ENCODE measurements at regions of chr11 and their contacts with region 1.

Region 1: GRCh38 chr11:126268708-126269579 is at the starts of genes FOXRED1 and SRPRA:
- DNase-seq: peak; percentile 99
- H3K4me3 ChIP-seq: peak within 1 kb of the TSS; percentile 89 to 93 (median 90)
- H3K27ac ChIP-seq: peak within 1 kb of the TSS; percentile 91
- H3K4me1 ChIP-seq: peaks cover 13% of the 10 kb centered on the region
- H3K27me3 ChIP-seq: no peaks in the 10 kb centered on the region
- CTCF ChIP-seq: no peak
- total RNA-seq, gene FOXRED1: 8.0 to 30.8 TPM
- total RNA-seq, gene SRPRA: 79.9 to 108 TPM

Region 2: GRCh38 chr11:125923012-125923579 is 345.8 kb before region 1 on chr11:
- CTCF ChIA-PET with region 1: no interaction called
- dilution Hi-C with region 1: no loop called
- in situ Hi-C with region 1: no loop called
- intact Hi-C with region 1: loop called (anchors 5 kb)
- DNase-seq: peak; percentile 50
- H3K4me3 ChIP-seq: no peak overlapping the region
- H3K27ac ChIP-seq: no peak overlapping the region
- H3K4me1 ChIP-seq: no peaks in the 10 kb centered on the region
- H3K27me3 ChIP-seq: peaks cover 3% of the 10 kb centered on the region
- CTCF ChIP-seq: peak; percentile 88 to 93

Region 3: GRCh38 chr11:125990244-125990643 is 278.7 kb before region 1 on chr11:
- CTCF ChIA-PET with region 1: no interaction called
- dilution Hi-C with region 1: no loop called
- in situ Hi-C with region 1: no loop called
- intact Hi-C with region 1: no loop called
- DNase-seq: peak; percentile 25
- H3K4me3 ChIP-seq: no peak overlapping the region
- H3K27ac ChIP-seq: no peak overlapping the region
- H3K4me1 ChIP-seq: no peaks in the 10 kb centered on the region
- H3K27me3 ChIP-seq: no peaks in the 10 kb centered on the region
- CTCF ChIP-seq: no peak

Region 4: DNA sequence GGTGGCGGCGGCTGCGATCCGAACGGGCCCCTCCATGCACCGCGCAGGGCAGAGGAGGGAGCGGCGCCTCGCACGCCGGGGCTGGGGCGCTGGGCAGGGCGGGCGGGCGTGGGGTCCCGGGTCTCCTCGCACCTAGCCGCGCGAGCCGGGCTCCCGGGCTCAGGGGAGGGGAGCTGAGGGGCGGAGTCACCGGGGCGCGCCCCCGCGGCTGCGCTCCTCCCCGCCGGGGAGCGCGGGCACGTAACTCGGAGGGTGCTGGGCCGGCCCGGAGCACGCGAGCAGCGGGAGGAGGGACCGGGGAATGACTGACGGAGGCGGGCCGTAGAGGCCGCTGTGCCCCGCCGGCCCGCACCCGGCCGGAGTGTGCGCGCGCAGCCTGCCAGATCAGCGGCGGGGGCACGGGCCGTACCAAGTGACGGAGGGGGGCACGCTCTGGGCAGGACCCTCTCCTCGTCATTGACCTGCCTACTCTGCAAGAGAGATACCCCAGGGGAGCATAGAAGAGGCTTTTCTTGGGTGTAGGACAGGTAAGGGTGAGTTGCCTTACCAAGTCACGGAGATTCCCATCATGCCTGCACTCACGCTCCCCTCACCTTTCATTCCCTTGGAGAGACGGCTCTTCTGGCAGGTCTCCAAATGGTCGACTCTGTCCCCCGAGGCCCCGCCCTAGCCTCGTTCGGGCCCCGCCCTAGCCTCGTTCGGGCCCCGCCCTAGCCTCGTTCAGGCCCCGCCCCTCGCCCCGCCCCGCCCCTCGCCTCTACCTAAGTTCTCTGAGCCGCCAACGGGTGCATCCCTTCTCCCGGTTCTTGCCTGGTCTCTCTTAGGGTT is 206.1 kb before region 1 on chr11 and contains the start of gene CDON:
- CTCF ChIA-PET with region 1: no interaction called
- dilution Hi-C with region 1: no loop called
- in situ Hi-C with region 1: no loop called
- intact Hi-C with region 1: loop called (anchors 5 kb)
- DNase-seq: peak; percentile 86
- H3K4me3 ChIP-seq: peak within 1 kb of the TSS; percentile 56 to 67 (median 60)
- H3K27ac ChIP-seq: peak within 1 kb of the TSS; percentile 95
- H3K4me1 ChIP-seq: peaks cover 4% of the 10 kb centered on the region
- H3K27me3 ChIP-seq: no peaks in the 10 kb centered on the region
- CTCF ChIP-seq: peak in 1 of 2 donors; percentile 10
- total RNA-seq, gene CDON: 1.9 to 3.8 TPM

Region 5: DNA sequence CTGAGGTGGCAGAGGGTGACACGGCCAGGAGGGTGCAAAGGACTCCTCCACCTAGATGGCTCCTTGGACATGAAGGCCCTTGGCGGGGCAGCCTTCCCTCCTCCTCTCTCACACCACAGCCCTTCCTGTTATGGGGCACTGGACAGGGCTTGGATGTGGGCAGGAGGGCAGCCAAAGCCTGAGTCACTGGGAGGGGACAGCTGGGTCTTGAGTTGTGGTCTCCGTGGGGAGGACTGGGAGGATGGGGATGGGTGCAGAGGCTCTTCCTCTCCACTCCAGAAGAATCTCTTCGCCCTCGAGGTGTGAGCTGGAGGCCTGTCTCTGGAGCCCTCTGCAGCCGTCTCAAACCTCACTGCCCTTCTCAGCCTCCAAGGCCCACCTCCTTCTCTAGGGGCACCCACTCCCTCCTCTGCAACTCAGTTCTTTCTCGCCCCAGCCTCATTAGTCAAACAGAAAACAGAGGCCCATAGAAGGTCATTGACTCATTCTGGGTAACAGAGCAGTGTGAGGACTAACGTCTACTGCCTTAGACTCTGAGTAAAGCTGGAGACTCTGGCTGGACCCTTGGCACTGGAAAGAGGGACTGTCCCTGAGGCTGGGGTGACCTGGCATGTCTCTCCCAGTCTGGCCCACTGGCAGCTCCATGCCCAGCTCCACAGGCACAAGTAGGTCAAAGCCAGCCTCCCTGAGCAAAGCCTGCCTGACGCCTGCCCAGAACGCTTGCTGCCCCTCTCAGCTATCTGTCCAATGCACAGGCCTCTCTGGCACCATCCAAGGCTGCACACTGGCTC is 158.8 kb before region 1 on chr11:
- CTCF ChIA-PET with region 1: interaction called, 15 read pairs
- dilution Hi-C with region 1: no loop called
- in situ Hi-C with region 1: no loop called
- intact Hi-C with region 1: no loop called
- DNase-seq: no peak
- H3K4me3 ChIP-seq: no peak overlapping the region
- H3K27ac ChIP-seq: no peak overlapping the region
- H3K4me1 ChIP-seq: no peaks in the 10 kb centered on the region
- H3K27me3 ChIP-seq: peaks cover 2% of the 10 kb centered on the region
- CTCF ChIP-seq: no peak

Region 6: GRCh38 chr11:126211235-126212088 is 57.5 kb before region 1 on chr11 and contains the starts of genes FAM118B and RPUSD4:
- CTCF ChIA-PET with region 1: no interaction called
- dilution Hi-C with region 1: no loop called
- in situ Hi-C with region 1: no loop called
- intact Hi-C with region 1: loop called (anchors 5 kb)
- DNase-seq: peak; percentile 95
- H3K4me3 ChIP-seq: peak within 1 kb of the TSS; percentile 87 to 100 (median 99)
- H3K27ac ChIP-seq: peak within 1 kb of the TSS; percentile 79
- H3K4me1 ChIP-seq: peaks cover 10% of the 10 kb centered on the region
- H3K27me3 ChIP-seq: no peaks in the 10 kb centered on the region
- CTCF ChIP-seq: no peak
- total RNA-seq, gene FAM118B: 16.0 to 27.7 TPM
- total RNA-seq, gene RPUSD4: 20.5 to 26.6 TPM

Region 7: GRCh38 chr11:126303623-126304456 is 34.9 kb after region 1 on chr11 and contains the start of gene DCPS:
- CTCF ChIA-PET with region 1: no interaction called
- dilution Hi-C with region 1: no loop called
- in situ Hi-C with region 1: no loop called
- intact Hi-C with region 1: loop called (anchors 1 kb)
- DNase-seq: peak; percentile 92
- H3K4me3 ChIP-seq: peak within 1 kb of the TSS; percentile 72 to 88 (median 88)
- H3K27ac ChIP-seq: peak within 1 kb of the TSS; percentile 90
- H3K4me1 ChIP-seq: peaks cover 26% of the 10 kb centered on the region
- H3K27me3 ChIP-seq: no peaks in the 10 kb centered on the region
- CTCF ChIP-seq: no peak
- total RNA-seq, gene DCPS: 16.5 to 29.0 TPM